PC-9 (cell line): ENCODE measurements at regions of chr11 and their contacts with region 1.

Region 1: GRCh38 chr11:119205574-119206510 is at the start of gene CBL:
- DNase-seq: peak; percentile 81 to 90
- H3K4me3 ChIP-seq: peak within 1 kb of the TSS; percentile 90
- H3K27ac ChIP-seq: peak within 1 kb of the TSS; percentile 57
- H3K4me1 ChIP-seq: peaks cover 26% of the 10 kb centered on the region
- H3K27me3 ChIP-seq: no peaks in the 10 kb centered on the region
- CTCF ChIP-seq: peak; percentile 94
- total RNA-seq, gene CBL: 26.3 and 32.9 TPM in 2 replicates

Region 2: GRCh38 chr11:118689851-118690552 is 515.8 kb before region 1 on chr11:
- CTCF ChIA-PET with region 1: no interaction called
- POLR2A ChIA-PET with region 1: no interaction called
- intact Hi-C with region 1: no loop called
- DNase-seq: peak; percentile 82 to 92
- H3K4me3 ChIP-seq: peak overlapping the region; percentile 61
- H3K27ac ChIP-seq: no peak overlapping the region
- H3K4me1 ChIP-seq: peaks cover 5% of the 10 kb centered on the region
- H3K27me3 ChIP-seq: no peaks in the 10 kb centered on the region
- CTCF ChIP-seq: peak; percentile 91

Region 3: DNA sequence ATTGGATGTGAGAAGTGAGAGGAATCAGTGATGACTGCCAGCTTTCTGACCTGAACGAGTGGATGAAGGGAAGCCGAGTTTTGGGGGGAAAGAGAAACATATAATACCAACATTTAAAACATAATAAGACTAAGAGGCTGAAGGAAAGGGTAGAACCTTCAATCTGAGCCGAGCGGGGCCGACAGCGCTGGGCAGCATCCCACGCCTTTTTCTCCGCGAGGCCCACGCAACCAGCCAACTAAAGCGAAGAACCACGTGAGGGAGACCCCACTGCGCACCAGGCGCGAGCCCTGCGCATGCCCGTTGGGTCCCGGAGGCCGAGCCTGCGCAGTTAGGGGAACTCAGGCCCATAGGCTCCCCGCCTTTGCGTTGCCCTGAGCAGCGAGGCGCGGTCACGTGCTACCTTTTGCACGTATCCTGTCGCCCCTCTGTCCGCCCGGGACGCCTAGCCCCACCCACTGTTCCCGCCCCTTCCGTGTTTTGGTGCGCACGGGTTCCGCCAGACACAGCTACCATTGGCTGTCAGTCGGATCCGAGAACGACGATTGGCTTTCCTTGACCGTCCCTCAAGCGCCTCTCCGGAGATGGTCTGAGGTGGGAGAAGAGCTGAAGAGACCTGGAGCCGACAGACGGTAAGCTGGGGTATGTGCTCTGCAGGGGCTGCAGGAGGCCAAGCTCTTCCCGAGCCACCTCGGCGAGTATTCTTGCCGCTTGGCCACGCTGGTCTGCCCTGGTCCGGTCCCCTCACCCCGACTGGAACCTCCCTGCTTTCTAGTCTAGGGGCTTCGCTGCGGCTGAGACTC is 84.6 kb before region 1 on chr11 and contains the start of gene HINFP:
- CTCF ChIA-PET with region 1: no interaction called
- POLR2A ChIA-PET with region 1: no interaction called
- intact Hi-C with region 1: no loop called
- DNase-seq: peak; percentile 99
- H3K4me3 ChIP-seq: peak within 1 kb of the TSS; percentile 75
- H3K27ac ChIP-seq: peak within 1 kb of the TSS; percentile 10; the same call in 1 of the 2 replicates
- H3K4me1 ChIP-seq: peaks cover 18% of the 10 kb centered on the region
- H3K27me3 ChIP-seq: no peaks in the 10 kb centered on the region
- CTCF ChIP-seq: no peak
- total RNA-seq, gene HINFP: 34.9 and 35.5 TPM in 2 replicates

Region 4: DNA sequence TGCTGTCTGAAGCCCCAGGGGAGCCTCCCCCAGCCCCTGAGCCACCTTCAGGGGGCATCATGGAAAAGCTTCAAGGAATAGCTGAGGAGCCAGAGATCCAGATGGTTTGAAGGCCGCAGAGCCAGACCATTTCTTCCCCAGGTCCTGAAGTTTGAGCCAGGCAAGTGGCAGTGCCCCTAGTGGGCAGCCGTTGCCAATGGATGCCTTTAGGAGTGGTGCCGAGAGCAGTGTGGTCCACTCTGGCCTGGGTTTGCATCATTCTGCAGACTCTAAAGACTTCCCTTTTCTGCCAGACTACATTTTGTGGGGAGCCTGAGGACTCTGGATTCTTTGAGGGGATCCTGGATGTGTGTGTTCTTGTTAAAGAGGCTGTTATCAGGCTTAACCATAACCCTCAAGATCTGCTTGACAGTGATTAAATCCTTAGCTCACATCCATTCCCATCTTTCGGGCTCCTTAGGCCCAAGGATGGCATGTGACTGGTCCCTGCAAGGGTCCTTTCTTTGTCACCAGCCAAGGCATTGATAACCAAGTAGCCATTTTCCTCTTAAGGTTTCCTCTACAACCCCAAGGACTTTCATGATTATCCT is 71.4 kb before region 1 on chr11:
- CTCF ChIA-PET with region 1: interaction called, 5 read pairs
- POLR2A ChIA-PET with region 1: interaction called, 11 read pairs
- intact Hi-C with region 1: no loop called
- DNase-seq: no peak
- H3K4me3 ChIP-seq: no peak overlapping the region
- H3K27ac ChIP-seq: no peak overlapping the region
- H3K4me1 ChIP-seq: no peaks in the 10 kb centered on the region
- H3K27me3 ChIP-seq: no peaks in the 10 kb centered on the region
- CTCF ChIP-seq: peak; percentile 78

Region 5: DNA sequence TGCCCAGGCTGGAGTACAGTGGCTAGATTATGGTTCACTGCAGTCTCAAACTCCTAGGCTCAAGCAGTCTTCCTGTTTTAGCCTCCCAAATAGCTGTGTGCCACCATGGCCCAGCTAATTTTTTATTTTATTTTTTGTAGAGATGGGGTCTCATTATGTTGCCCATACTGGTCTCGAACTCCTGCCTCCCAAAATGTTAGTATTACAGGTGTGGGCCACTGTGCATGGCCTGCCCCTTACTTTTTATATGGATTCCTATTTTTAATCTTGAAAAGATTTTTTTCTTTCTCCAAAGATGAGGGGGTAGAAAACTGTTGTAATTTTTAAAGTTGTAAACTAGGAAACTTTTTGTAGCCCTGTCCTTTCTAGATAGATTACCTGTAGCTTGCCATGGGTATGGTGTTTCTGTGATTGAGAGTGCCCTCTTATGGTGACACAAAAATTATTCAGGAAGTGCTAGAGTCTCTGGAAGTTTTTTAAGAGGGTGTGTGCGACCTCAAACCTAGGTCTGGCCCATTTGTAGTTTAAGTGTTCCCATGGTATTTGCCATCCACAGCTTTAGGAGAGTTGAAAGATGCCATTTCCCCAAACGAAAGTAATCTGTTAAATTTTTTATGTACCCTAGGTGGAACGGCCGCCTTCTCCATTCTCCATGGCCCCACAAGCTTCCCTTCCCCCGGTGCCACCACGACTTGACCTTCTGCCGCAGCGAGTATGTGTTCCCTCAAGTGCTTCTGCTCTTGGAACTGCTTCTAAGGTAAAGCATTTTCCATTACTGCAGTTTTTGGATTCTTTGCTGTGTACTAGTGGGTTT is 78.7 kb after region 1 on chr11:
- CTCF ChIA-PET with region 1: interaction called, 15 read pairs
- POLR2A ChIA-PET with region 1: no interaction called
- intact Hi-C with region 1: loop called (anchors 5 kb)
- DNase-seq: peak in 1 of 2 experiments; percentile 52
- H3K4me3 ChIP-seq: no peak overlapping the region
- H3K27ac ChIP-seq: no peak overlapping the region
- H3K4me1 ChIP-seq: no peaks in the 10 kb centered on the region
- H3K27me3 ChIP-seq: no peaks in the 10 kb centered on the region
- CTCF ChIP-seq: peak; percentile 71

Region 6: DNA sequence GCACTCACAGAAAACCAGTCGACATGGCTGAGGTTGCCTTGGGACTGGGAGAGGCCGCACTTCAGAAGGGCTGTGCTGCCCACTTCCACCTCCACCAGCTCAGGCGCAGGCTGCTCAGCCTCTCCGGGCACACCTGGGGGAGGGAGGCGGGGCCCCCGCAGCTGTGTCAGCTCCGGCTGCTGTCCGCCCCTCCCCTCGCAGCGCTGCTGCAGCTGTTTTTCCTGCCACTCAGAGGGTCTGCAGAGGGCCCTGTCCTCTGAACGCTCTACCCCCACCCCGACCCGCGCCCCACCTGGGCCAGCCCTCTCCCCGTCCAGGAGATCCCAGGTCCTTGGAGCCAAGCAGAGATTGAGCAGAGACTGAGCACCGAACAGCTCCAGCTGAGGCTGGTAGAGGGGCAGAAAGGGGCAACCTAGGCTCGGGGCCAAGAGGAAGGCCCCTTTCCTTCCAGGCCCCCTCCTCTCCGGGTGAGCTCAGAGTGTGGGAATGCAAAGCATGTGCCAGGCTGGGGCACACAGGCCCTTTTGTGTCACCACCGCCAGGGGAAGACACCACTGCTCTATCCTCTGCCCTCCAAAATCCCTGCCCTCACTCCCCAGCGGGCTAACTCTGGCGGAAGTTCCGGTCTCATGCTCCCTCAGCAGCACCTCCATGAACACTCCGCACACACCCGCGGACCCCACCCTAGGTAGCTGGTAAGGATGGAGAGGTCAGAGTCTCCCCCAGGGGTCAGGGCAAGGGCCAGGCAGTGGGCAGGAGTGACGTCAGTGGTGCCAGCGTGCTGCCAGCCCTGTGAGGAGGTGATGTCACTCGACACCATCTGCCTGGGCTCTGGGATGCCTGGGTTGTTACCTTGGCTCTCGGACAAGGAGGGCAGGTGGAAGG is 109.5 kb after region 1 on chr11:
- CTCF ChIA-PET with region 1: no interaction called
- POLR2A ChIA-PET with region 1: interaction called, 4 read pairs
- intact Hi-C with region 1: loop called (anchors 5 kb)
- DNase-seq: peak; percentile 65 to 71
- H3K4me3 ChIP-seq: peak overlapping the region; percentile 67
- H3K27ac ChIP-seq: no peak overlapping the region
- H3K4me1 ChIP-seq: peaks cover 31% of the 10 kb centered on the region
- H3K27me3 ChIP-seq: peaks cover 20% of the 10 kb centered on the region
- CTCF ChIP-seq: peak; percentile 34; the same call in 1 of the 2 replicates

Region 7: GRCh38 chr11:119694334-119694733 is 488.5 kb after region 1 on chr11:
- CTCF ChIA-PET with region 1: interaction called, 10 read pairs
- POLR2A ChIA-PET with region 1: no interaction called
- intact Hi-C with region 1: no loop called
- DNase-seq: peak; percentile 27 to 70
- H3K4me3 ChIP-seq: no peak overlapping the region
- H3K27ac ChIP-seq: peak overlapping the region; percentile 38; the same call in 1 of the 2 replicates
- H3K4me1 ChIP-seq: peaks cover 66% of the 10 kb centered on the region
- H3K27me3 ChIP-seq: no peaks in the 10 kb centered on the region
- CTCF ChIP-seq: peak; percentile 43; the same call in 1 of the 2 replicates